ENCODE measurements at regions of chr14 and their contacts with region 1.

Region 1: DNA sequence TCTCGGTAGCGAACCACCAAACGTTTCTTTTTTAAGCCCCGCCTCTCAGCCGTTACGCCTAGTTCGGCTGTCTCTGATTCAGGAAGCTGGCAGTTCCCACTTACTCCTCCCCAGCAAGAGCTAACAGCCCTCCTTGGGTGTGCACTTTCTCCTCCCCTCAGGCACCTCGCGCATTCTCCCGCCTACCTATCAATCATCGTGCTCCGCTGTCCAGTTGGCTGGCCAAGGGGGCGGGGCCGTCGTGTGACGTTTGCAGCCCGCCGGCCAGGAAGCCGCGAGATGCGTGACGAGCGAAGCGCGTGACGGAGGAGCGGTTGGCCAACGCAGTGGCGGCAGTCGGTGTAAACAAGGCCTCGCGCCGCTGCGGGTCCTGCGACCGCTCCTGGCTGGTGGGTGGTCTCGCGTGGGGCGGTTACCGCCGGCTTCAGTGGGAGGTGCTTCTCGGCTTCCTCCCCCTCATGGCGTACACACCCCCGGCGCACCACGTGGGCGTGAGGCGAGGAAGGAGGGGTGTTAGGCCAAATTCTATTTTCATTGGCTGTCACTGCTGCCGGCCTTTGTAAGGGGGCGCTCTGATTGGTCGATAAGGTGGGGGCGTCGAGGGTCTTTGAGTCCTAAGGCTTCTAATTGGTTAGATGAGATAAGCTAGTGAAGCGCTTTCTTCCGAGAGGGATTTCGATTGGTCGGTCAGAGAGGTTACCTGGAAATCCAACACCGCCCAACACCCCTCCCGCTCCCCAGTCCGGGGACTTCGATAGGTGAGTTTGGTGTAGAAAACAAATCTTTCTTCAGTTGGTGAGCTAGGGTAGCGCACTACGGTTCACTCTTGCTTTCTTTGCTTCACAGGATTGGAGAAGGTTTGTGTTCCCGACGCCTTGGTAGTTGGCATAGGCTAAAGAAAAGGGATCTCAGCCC is at the starts of genes DCAF11 and NRL:
- DNase-seq: peak; percentile 99
- H3K27ac ChIP-seq: peak within 1 kb of the TSS; percentile 99
- CTCF ChIP-seq: no peak

Region 2: DNA sequence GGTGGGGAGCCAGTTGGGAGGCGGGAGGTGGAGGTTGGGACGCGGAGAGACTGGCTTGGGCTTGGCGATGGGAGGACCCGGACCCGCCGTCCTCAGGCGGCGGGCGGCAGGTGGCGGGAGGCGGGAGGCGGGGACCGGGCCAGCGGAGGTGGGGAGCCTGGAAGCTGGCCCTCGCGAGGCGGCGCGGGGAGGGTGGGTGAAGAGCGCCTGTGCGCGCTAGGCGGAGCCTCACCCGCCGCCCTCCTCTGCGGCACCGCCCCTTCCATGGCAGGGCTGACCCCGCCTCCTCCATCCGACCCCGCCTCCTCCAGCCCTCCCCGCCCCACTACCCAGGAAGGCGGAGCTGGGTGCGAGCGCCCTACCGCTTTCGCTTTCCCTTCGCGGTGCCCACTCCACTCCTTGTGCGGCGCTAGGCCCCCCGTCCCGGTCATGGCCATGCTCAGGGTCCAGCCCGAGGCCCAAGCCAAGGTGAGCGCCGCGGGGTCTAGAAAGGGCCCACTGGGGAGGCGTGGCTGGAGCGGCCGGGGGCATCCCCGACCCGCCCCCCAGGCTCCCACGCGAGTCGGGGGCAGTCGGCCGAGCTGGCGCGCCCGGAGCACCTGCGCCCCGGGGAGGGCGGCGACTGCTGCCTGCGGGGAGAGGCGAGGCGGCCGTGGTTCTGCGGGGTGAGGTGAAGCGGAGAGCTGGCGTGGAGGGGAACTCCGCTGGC is 21.2 kb after region 1 on chr14 and contains the start of gene PSME1:
- CTCF ChIA-PET with region 1: interaction called, 3 read pairs
- POLR2A ChIA-PET with region 1: interaction called, 12 read pairs
- DNase-seq: peak; percentile 94
- H3K27ac ChIP-seq: peak within 1 kb of the TSS; percentile 96
- CTCF ChIP-seq: no peak

Region 3: GRCh38 chr14:24249230-24250021 is 134.6 kb after region 1 on chr14:
- CTCF ChIA-PET with region 1: no interaction called
- POLR2A ChIA-PET with region 1: no interaction called
- DNase-seq: no peak
- H3K27ac ChIP-seq: peak overlapping the region; percentile 43
- CTCF ChIP-seq: no peak

Region 4: GRCh38 chr14:25833341-25834126 is 1718.7 kb after region 1 on chr14:
- CTCF ChIA-PET with region 1: no interaction called
- POLR2A ChIA-PET with region 1: no interaction called
- DNase-seq: peak; percentile 4
- H3K27ac ChIP-seq: no peak overlapping the region
- CTCF ChIP-seq: 0 out of 2 replicates have a peak, but pooled peaks have one; percentile 21